ENCODE measurements at regions of chr4 and their contacts with region 1.

Region 1: GRCh38 chr4:78951862-78952472 is 12.7 kb upstream of the PAQR3 start:
- DNase-seq: peak in 16 of 35 experiments; percentile 2 to 66 (median 11)
- ATAC-seq: peak; percentile 50 to 65 (median 58)
- H3K4me3 ChIP-seq: no peak overlapping the region
- H3K4me3 Mint-ChIP-seq: no peak overlapping the region
- H3K27ac ChIP-seq: no peak overlapping the region
- H3K27ac Mint-ChIP-seq: no peak overlapping the region
- H3K4me1 ChIP-seq: no peaks in the 10 kb centered on the region
- H3K4me1 Mint-ChIP-seq: no peaks in the 10 kb centered on the region
- H3K27me3 ChIP-seq: no peaks in the 10 kb centered on the region
- H3K27me3 Mint-ChIP-seq: peaks cover 14 to 21% of the 10 kb centered on the region in 2 donors

Region 2: DNA sequence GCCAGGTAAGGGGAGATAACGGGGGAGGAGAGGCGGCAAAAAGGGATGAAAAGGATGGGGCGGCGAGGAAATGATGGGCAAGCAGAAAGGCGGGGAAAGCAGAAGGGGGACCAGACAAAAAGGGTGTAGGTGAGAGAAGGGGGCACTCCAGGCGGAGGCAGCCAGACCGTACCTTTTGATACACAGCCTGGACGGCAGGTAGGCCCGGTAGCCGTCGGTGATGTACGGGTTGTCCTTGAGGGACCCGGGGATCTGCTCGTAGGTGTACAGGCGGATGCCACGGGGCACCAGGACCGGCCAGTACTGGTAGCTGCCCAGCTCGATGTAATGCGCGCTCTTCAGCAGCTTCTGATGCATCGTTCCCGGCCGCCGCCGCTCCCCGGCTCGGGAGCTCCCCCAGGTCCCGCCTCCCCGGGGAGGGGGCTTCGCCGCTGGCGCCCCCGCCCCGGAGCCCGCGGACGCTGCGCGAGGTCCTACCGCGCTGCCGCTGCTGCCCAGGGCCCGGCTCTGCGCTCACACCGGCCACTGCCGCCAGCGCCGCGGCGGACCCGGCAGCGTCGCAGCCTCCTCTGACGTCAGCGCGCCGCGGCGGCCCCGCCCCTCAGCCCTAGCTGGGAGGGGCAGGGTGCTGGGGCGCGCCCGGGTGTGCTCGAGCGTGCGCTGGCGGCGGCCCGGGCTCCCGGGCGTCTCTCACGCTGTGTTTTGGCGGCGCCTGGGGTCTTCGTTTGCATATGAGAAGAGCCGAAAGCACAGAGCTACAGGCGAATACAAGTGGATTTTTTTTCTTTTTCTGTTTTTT is 12.9 kb before region 1 on chr4 and contains the start of gene PAQR3:
- CTCF ChIA-PET with region 1: interaction called, 10 to 12 read pairs
- POLR2A ChIA-PET with region 1: interaction called, 3 read pairs
- DNase-seq: peak; percentile 59 to 92 (median 79)
- ATAC-seq: peak; percentile 98 to 100 (median 98)
- H3K4me3 ChIP-seq: peak within 1 kb of the TSS; percentile 87 to 90
- H3K4me3 Mint-ChIP-seq: peak within 1 kb of the TSS; percentile 90 to 99 (median 95)
- H3K27ac ChIP-seq: peak within 1 kb of the TSS; percentile 71
- H3K27ac Mint-ChIP-seq: peak within 1 kb of the TSS; percentile 28 to 85
- H3K4me1 ChIP-seq: peaks cover 10 to 14% of the 10 kb centered on the region in 2 experiments
- H3K4me1 Mint-ChIP-seq: peaks cover 40 to 54% (median 40%) of the 10 kb centered on the region in 3 donors
- H3K27me3 ChIP-seq: peaks cover 0 to 9% of the 10 kb centered on the region in 2 experiments
- H3K27me3 Mint-ChIP-seq: peaks cover 8 to 10% of the 10 kb centered on the region in 2 donors
- total RNA-seq, gene PAQR3: 8.7 to 26.6 (median 11.2) TPM

Region 3: GRCh38 chr4:79178760-79179159 is 226.8 kb after region 1 on chr4:
- CTCF ChIA-PET with region 1: no interaction called
- POLR2A ChIA-PET with region 1: no interaction called
- DNase-seq: no peak
- ATAC-seq: no peak
- H3K4me3 ChIP-seq: no peak overlapping the region
- H3K4me3 Mint-ChIP-seq: no peak overlapping the region
- H3K27ac ChIP-seq: no peak overlapping the region
- H3K27ac Mint-ChIP-seq: no peak overlapping the region
- H3K4me1 ChIP-seq: no peaks in the 10 kb centered on the region
- H3K4me1 Mint-ChIP-seq: no peaks in the 10 kb centered on the region
- H3K27me3 ChIP-seq: no peaks in the 10 kb centered on the region
- H3K27me3 Mint-ChIP-seq: no peaks in the 10 kb centered on the region

Region 4: DNA sequence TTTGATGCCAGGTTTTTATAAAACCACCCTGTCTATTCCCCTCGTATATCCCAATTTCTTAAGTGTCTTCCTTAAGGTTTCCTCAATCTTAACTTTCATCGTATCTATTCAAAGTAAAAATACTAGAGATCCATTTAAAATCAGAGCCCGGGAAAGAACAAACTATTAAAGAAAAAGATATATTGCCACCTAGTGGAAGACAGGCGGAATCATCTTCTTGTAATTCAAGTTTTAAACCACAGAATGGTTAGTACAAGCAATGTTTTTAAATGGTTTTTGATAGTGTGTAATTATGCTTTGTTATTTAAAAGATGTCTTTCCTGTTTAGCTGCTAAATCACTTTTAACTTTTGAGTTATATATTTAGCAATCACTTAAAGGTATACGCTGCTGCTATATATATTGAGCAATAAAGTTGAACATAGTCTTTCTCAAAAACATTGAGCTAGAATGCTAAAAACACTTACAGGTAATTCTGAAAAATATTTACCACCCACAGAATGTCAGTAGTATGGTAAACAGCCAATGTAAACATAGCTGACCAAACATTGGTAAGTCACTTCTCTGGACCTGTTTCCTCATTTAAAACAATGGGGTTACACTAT is 1263.6 kb after region 1 on chr4:
- CTCF ChIA-PET with region 1: interaction called, 7 to 11 read pairs
- POLR2A ChIA-PET with region 1: no interaction called
- DNase-seq: peak in 1 of 35 experiments; percentile 55
- ATAC-seq: peak in 1 of 4 experiments; percentile 58
- H3K4me3 ChIP-seq: no peak overlapping the region
- H3K4me3 Mint-ChIP-seq: no peak overlapping the region
- H3K27ac ChIP-seq: no peak overlapping the region
- H3K27ac Mint-ChIP-seq: no peak overlapping the region
- H3K4me1 ChIP-seq: no peaks in the 10 kb centered on the region
- H3K4me1 Mint-ChIP-seq: peaks cover 0 to 2% (median 2%) of the 10 kb centered on the region in 3 donors
- H3K27me3 ChIP-seq: peaks cover 0 to 3% of the 10 kb centered on the region in 2 experiments
- H3K27me3 Mint-ChIP-seq: peaks cover 10 to 32% of the 10 kb centered on the region in 2 donors

Measured in T-cell (primary cell).